Activated CD8-positive, alpha-beta T cell treated with anti-CD3 and anti-CD28 coated beads for 36 hours (primary cell): ENCODE measurements at regions of chr18 and their contacts with region 1.

Region 1: GRCh38 chr18:12038639-12039417 is 54.8 kb upstream of the ANKRD62 start:
- DNase-seq: peak; percentile 74
- ATAC-seq: peak; percentile 93
- H3K4me3 Mint-ChIP-seq: peak overlapping the region; percentile 58
- H3K27ac Mint-ChIP-seq: no peak overlapping the region
- H3K4me1 Mint-ChIP-seq: peaks cover 6% of the 10 kb centered on the region
- H3K27me3 Mint-ChIP-seq: peaks cover 11% of the 10 kb centered on the region
- CTCF ChIP-seq: peak; percentile 99

Region 2: DNA sequence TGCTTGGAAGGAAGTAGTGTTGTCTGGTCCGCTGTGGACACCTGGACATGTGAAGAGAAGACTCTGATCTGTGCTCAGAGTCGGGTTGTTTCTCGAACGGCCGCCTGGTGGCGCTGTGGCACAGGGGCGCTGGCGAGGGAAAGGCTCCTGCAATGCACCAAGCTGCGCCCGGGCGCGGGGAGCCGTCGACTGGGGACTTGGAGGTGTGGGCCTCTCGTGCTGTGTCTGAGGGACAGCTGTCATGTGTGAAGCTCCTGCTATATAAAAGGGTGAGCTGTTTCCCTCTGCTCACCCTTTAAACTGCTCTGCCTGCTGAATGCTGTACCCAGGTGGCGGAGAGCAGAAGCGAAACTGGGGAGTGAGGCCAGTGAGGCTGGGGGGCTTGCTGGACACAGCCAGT is 305.8 kb before region 1 on chr18:
- CTCF ChIA-PET with region 1: interaction called, 22 read pairs
- POLR2A ChIA-PET with region 1: no interaction called
- intact Hi-C with region 1: loop called (anchors 5 kb)
- DNase-seq: peak; percentile 80
- ATAC-seq: peak; percentile 91
- H3K4me3 Mint-ChIP-seq: no peak overlapping the region
- H3K27ac Mint-ChIP-seq: no peak overlapping the region
- H3K4me1 Mint-ChIP-seq: no peaks in the 10 kb centered on the region
- H3K27me3 Mint-ChIP-seq: peaks cover 32% of the 10 kb centered on the region
- CTCF ChIP-seq: peak; percentile 90

Region 3: DNA sequence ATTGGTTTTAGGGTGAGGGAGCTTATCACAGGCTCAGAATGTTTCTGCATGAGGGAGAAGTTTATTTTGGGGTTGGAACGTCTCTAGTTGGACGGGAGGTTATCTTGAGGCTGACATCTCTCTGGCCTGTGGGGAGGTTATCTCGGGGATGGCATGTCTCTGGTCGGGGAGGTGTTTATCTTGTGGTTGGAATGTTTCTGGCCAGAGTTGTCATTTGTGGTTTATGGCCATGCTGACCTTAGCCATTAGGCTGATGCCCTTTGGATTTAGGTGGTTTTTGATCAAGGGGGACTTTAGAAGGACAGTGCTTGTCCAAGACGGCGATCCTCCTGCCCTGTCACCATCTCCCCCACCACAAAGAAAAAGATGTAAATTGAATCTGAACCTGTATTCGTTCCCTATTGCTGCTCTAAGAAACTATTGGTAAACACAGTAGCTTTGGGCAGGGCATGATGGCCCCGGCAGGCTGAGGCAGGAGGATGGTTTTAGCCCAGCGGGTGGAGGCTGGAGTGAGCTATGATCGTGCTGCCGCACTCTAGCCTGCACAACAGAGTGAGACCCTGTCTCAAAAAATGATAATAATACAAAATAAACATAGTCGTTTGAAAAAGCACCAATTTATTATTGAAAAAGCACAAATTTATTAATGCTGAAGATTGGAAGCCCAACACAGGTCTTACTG is 112.9 kb before region 1 on chr18:
- CTCF ChIA-PET with region 1: interaction called, 12 read pairs
- POLR2A ChIA-PET with region 1: no interaction called
- intact Hi-C with region 1: no loop called
- DNase-seq: no peak
- ATAC-seq: no peak
- H3K4me3 Mint-ChIP-seq: no peak overlapping the region
- H3K27ac Mint-ChIP-seq: no peak overlapping the region
- H3K4me1 Mint-ChIP-seq: peaks cover 3% of the 10 kb centered on the region
- H3K27me3 Mint-ChIP-seq: peaks cover 2% of the 10 kb centered on the region
- CTCF ChIP-seq: no peak

Region 4: GRCh38 chr18:12015416-12016062 is 23.3 kb before region 1 on chr18:
- CTCF ChIA-PET with region 1: no interaction called
- POLR2A ChIA-PET with region 1: no interaction called
- intact Hi-C with region 1: no loop called
- DNase-seq: no peak
- ATAC-seq: no peak
- H3K4me3 Mint-ChIP-seq: no peak overlapping the region
- H3K27ac Mint-ChIP-seq: no peak overlapping the region
- H3K4me1 Mint-ChIP-seq: no peaks in the 10 kb centered on the region
- H3K27me3 Mint-ChIP-seq: no peaks in the 10 kb centered on the region
- CTCF ChIP-seq: no peak

Region 5: DNA sequence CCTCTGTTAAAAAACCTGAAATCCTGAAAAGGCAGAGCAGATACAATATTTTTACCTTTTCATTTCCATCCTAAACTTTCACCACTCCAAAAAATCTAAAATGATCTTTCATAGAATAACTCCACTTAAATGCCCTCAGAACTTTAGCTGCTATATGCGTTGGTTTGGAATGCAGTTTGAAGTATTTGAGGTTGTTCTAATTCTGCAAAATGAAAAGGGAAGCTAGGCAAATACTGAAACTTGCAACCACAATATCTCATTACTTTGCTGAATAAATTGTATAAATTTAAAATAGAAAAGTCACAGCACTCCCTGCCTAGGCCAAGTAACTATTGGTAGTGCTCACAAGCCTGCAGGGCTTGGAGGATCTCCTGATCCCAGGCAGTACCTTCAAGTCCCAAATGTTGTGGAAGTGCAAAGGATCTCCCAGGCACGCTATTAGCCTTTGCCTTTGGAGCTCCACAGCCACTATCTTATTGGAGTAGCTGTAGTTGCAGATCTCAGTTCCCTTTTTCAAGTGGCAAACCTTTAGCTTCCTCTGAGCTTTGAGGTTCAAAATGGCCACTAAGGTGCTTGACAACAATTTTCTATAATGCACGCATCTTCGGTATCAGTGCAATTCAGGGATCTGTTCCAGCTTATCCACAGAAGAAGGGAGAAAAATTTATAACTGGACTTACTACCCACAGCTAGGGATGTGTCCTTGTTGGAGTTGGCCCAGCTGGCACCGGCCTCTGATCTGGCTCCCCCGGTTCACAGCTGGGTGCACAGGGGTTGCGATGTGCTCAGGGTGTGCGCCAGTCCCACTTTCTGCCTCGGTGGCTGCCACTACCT is 11.4 kb after region 1 on chr18:
- CTCF ChIA-PET with region 1: interaction called, 15 read pairs
- POLR2A ChIA-PET with region 1: no interaction called
- intact Hi-C with region 1: no loop called
- DNase-seq: no peak
- ATAC-seq: no peak
- H3K4me3 Mint-ChIP-seq: no peak overlapping the region
- H3K27ac Mint-ChIP-seq: no peak overlapping the region
- H3K4me1 Mint-ChIP-seq: peaks cover 3% of the 10 kb centered on the region
- H3K27me3 Mint-ChIP-seq: peaks cover 2% of the 10 kb centered on the region
- CTCF ChIP-seq: no peak